Activated CD4-positive, alpha-beta T cell treated with anti-CD3 and anti-CD28 coated beads, Interleukin-2, amount 10 ng/mL, durations not matched to agents 7 days and 5 days (primary cell): ENCODE measurements at regions of chr22 and their contacts with region 1.

Region 1: GRCh38 chr22:37244114-37244921 is at the start of gene RAC2:
- DNase-seq: peak; percentile 94
- H3K4me3 Mint-ChIP-seq: peak within 1 kb of the TSS; percentile 99
- H3K27ac Mint-ChIP-seq: peak within 1 kb of the TSS; percentile 99
- H3K4me1 Mint-ChIP-seq: peaks cover 53% of the 10 kb centered on the region
- H3K27me3 Mint-ChIP-seq: no peaks in the 10 kb centered on the region
- total RNA-seq, gene RAC2: 1,015 to 1,117 TPM

Region 2: DNA sequence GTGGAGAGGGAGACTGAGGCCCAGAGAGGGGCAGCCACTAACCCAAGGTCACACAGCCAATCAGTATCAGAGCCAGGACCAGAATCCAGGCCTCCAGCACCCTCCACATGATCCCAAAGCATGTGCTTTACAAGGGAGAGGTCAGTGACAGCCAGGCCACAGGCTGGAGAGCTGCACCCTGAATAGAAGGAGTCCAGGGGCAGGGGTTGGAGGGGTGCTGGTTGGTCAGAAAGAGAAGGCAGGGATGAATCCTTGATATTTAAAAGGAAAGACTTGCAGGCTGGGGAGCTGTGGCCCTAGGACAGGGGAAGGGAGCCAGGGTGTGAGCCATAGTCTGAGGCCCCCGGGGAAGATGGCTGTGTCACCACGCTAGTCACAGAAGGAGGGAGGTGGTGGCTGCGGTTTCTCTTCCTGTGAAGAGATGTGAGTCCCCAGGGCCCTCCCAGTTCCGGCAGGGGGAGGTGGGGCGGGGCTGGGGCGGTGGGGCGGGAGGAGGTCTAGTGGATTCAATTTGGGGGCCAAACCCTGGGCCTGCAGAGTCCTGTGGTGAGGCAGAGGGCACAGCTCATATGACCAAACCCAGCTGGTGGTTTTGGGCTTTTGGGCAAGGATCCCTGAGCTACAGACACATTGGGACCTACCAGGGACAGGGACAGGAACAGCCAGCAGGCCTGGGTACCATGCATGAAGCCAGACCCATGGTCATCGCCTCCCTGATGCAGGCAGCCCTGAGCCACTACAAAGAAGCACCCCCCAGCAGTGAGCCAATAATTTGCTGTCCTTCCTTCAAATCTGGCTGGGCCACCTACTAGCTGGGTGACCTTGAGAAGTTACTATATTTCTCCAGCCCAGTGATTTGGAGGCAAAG is 14.3 kb before region 1 on chr22:
- CTCF ChIA-PET with region 1: interaction called, 80 read pairs
- POLR2A ChIA-PET with region 1: interaction called, 6 read pairs
- DNase-seq: peak; percentile 95
- H3K4me3 Mint-ChIP-seq: peak overlapping the region; percentile 76
- H3K27ac Mint-ChIP-seq: peak overlapping the region; percentile 100
- H3K4me1 Mint-ChIP-seq: peaks cover 92% of the 10 kb centered on the region
- H3K27me3 Mint-ChIP-seq: no peaks in the 10 kb centered on the region

Region 3: GRCh38 chr22:37260901-37261336 is 16.6 kb after region 1 on chr22:
- CTCF ChIA-PET with region 1: interaction called, 81 read pairs
- POLR2A ChIA-PET with region 1: interaction called, 4 read pairs
- DNase-seq: peak; percentile 69
- H3K4me3 Mint-ChIP-seq: no peak overlapping the region
- H3K27ac Mint-ChIP-seq: no peak overlapping the region
- H3K4me1 Mint-ChIP-seq: peaks cover 33% of the 10 kb centered on the region
- H3K27me3 Mint-ChIP-seq: peaks cover 18% of the 10 kb centered on the region

Region 4: DNA sequence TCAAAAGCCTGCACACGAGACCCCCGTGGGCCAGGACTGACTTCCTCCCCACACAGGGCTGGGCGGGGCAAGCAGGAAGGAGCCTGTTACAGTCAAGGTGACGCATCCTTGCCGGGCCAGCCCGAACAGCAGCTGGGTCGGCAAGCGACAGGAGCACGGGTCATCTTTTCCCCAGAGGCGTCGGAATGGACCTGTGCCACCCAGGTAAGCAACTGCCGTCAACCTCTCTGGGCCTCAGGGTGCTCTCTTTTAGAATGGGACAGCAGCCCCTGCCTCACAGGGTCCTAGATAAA is 38.0 kb after region 1 on chr22 and contains the start of gene CYTH4:
- CTCF ChIA-PET with region 1: interaction called, 11 read pairs
- POLR2A ChIA-PET with region 1: interaction called, 4 read pairs
- DNase-seq: peak; percentile 85
- H3K4me3 Mint-ChIP-seq: peak within 1 kb of the TSS; percentile 89
- H3K27ac Mint-ChIP-seq: peak within 1 kb of the TSS; percentile 94
- H3K4me1 Mint-ChIP-seq: peaks cover 58% of the 10 kb centered on the region
- H3K27me3 Mint-ChIP-seq: no peaks in the 10 kb centered on the region
- total RNA-seq, gene CYTH4: 106 to 110 TPM

Region 5: DNA sequence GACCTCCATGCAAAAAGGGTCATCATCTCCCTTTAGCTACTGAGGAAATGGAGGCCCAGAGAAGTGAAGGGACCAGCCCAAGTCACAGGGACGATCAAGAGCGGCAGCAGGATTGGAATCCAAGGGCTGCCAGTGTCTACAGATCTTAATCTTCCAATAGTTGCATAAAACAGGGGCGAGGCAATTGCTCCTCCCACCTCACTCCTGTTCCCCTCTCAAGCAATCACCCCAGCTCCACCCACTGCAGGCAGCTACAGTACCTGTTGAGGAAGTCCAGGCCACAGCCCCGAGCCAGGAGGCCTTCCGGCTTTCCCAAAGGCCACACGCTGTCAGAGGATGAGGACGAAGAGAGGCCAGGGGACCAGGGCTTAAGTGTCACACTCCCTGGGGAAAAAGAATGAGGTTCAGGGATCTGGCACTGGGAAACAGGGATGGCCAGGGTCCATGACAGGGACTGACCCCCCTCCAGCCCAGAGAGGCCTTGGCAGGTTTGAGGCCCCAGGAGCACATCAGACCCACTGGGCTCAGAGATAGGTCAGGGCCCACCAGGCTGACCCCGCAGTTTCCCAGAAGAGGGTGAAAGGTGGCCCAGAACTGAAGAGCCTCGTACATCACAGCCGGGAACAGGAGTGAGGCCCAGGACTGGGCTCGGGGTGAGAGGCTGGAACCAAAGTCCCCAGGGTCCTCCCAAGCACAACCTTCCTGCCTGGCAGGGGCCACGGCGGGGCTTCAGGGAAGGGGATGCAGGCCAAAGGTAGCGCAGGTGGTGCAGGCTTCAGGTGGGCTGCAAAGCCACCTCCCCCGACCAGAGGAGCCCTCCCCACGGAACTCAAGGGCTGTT is 258.2 kb after region 1 on chr22:
- CTCF ChIA-PET with region 1: no interaction called
- POLR2A ChIA-PET with region 1: no interaction called
- DNase-seq: no peak
- H3K4me3 Mint-ChIP-seq: no peak overlapping the region
- H3K27ac Mint-ChIP-seq: no peak overlapping the region
- H3K4me1 Mint-ChIP-seq: peaks cover 15% of the 10 kb centered on the region
- H3K27me3 Mint-ChIP-seq: peaks cover 12% of the 10 kb centered on the region